GM12878 (cell line): ENCODE measurements at regions of chr7 and their contacts with region 1.

Region 1: DNA sequence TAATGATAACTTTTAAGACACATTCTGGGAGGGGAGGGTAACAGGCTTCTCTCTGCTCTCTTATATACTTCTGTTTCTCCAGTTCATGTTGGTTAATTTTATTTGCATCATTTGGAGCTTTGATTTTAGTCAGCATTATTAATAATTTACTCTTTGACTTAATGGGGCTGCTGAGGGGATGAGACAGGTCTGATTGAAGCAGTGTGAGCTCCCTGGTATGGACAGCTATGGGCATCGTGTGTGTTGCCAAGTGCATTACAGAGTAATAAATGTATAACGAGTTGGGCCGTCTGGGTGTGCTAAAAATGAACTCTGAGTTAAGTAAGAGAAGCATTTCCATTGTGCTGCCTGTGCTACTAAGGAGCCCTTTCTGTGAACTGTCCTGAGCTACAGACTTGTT is 31.7 kb upstream of the IKZF1 start:
- DNase-seq: no peak
- ATAC-seq: peak; percentile 47
- H3K4me3 ChIP-seq: no peak overlapping the region
- H3K27ac ChIP-seq: no peak overlapping the region
- H3K4me1 ChIP-seq: peaks cover 76% of the 10 kb centered on the region
- H3K27me3 ChIP-seq: no peaks in the 10 kb centered on the region
- CTCF ChIP-seq: no peak
- EP300 ChIP-seq: no peak
- POLR2A ChIP-seq: no peak
- RAD21 ChIP-seq: no peak

Region 2: GRCh38 chr7:50229964-50230363 is 42.8 kb before region 1 on chr7:
- CTCF ChIA-PET with region 1: interaction called, 9 read pairs
- POLR2A ChIA-PET with region 1: interaction called, 3 read pairs
- RAD21 ChIA-PET with region 1: no interaction called
- SMC1A ChIA-PET with region 1: interaction called, 22 read pairs
- in situ Hi-C with region 1: no loop called
- intact Hi-C with region 1: no loop called
- DNase-seq: no peak
- ATAC-seq: no peak
- H3K4me3 ChIP-seq: no peak overlapping the region
- H3K27ac ChIP-seq: no peak overlapping the region
- H3K4me1 ChIP-seq: no peaks in the 10 kb centered on the region
- H3K27me3 ChIP-seq: no peaks in the 10 kb centered on the region
- CTCF ChIP-seq: peak; percentile 21 to 58 (median 46); a peak in 5 of 6 replicates
- EP300 ChIP-seq: no peak
- POLR2A ChIP-seq: no peak
- RAD21 ChIP-seq: peak; percentile 58

Region 3: DNA sequence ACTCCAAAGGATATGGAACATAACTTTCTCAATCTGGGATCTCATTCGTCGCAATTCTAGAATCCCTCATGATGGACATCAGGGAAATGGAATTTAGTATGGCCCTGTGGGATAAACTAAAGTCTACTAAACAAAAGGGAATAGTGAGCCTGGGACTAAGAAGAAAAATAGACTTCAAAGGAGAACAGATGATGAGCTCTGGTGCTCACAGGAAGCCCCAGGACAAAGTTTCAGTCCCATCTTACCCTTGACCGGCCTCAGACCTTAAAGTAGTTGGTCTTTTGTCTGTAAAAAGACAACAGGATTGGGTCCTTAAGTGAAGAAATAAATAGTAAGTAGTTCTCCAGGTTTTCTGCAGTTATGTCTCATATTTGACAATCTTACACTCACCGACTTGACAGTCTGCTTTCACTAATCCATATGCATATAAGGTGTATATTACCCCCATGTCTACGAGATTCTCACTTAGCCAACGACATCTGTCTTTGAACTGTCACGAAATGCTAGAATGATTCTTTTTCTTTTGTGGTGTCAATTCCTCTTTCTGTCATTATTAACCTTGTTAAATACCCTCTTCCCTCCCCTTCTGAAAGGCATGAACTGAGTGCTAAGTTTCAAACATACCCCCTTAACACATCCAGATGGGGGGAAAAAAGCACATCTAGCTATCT is 20.8 kb after region 1 on chr7:
- CTCF ChIA-PET with region 1: interaction called, 29 read pairs
- POLR2A ChIA-PET with region 1: interaction called, 7 read pairs
- RAD21 ChIA-PET with region 1: interaction called, 53 read pairs
- SMC1A ChIA-PET with region 1: interaction called, 274 read pairs
- in situ Hi-C with region 1: no loop called
- intact Hi-C with region 1: no loop called
- DNase-seq: no peak
- ATAC-seq: peak; percentile 77
- H3K4me3 ChIP-seq: 0 out of 2 replicates have a peak overlapping the region, but pooled peaks have one; percentile 3
- H3K27ac ChIP-seq: peak overlapping the region; percentile 36
- H3K4me1 ChIP-seq: peaks cover 22% of the 10 kb centered on the region
- H3K27me3 ChIP-seq: no peaks in the 10 kb centered on the region
- CTCF ChIP-seq: no peak
- EP300 ChIP-seq: peak in 1 of 2 experiments; percentile 67; a peak in 1 of 4 replicates
- POLR2A ChIP-seq: no peak
- RAD21 ChIP-seq: no peak

Region 4: DNA sequence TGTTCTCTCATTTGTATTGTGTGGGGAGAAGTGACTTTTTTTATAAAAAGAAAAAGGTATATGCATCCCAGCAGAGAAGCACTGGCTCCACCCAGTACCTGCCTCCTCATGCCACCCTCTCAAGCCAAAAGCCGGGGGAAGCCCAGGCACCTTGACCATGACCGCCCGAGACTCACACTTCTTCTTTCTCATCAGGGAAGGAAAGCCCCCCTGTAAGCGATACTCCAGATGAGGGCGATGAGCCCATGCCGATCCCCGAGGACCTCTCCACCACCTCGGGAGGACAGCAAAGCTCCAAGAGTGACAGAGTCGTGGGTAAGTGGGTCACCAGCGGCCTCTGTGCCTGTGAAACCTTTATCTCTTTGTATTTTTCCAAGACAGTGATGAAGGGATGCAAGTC is 54.6 kb after region 1 on chr7:
- CTCF ChIA-PET with region 1: interaction called, 6 read pairs
- POLR2A ChIA-PET with region 1: interaction called, 9 read pairs
- RAD21 ChIA-PET with region 1: interaction called, 20 read pairs
- SMC1A ChIA-PET with region 1: interaction called, 24 read pairs
- in situ Hi-C with region 1: no loop called
- intact Hi-C with region 1: no loop called
- DNase-seq: no peak
- ATAC-seq: peak; percentile 80
- H3K4me3 ChIP-seq: no peak overlapping the region
- H3K27ac ChIP-seq: peak overlapping the region; percentile 44
- H3K4me1 ChIP-seq: peaks cover 44% of the 10 kb centered on the region
- H3K27me3 ChIP-seq: no peaks in the 10 kb centered on the region
- CTCF ChIP-seq: no peak; a peak in 1 of 6 replicates
- EP300 ChIP-seq: peak in 1 of 2 experiments; percentile 83; a peak in 2 of 4 replicates
- POLR2A ChIP-seq: no peak
- RAD21 ChIP-seq: peak; percentile 19; the same call in 1 of the 2 replicates

Region 5: GRCh38 chr7:50335795-50336754 is 63.3 kb after region 1 on chr7:
- CTCF ChIA-PET with region 1: interaction called, 10 read pairs
- POLR2A ChIA-PET with region 1: interaction called, 9 read pairs
- RAD21 ChIA-PET with region 1: interaction called, 22 read pairs
- SMC1A ChIA-PET with region 1: interaction called, 20 read pairs
- in situ Hi-C with region 1: no loop called
- intact Hi-C with region 1: no loop called
- DNase-seq: no peak
- ATAC-seq: peak; percentile 13
- H3K4me3 ChIP-seq: no peak overlapping the region
- H3K27ac ChIP-seq: peak overlapping the region; percentile 75
- H3K4me1 ChIP-seq: peaks cover 75% of the 10 kb centered on the region
- H3K27me3 ChIP-seq: no peaks in the 10 kb centered on the region
- CTCF ChIP-seq: peak; percentile 4 to 30 (median 16); a peak in 3 of 6 replicates
- EP300 ChIP-seq: no peak
- POLR2A ChIP-seq: peak; percentile 45; the same call in 1 of the 2 replicates
- RAD21 ChIP-seq: peak; percentile 32; the same call in 1 of the 2 replicates

Region 6: DNA sequence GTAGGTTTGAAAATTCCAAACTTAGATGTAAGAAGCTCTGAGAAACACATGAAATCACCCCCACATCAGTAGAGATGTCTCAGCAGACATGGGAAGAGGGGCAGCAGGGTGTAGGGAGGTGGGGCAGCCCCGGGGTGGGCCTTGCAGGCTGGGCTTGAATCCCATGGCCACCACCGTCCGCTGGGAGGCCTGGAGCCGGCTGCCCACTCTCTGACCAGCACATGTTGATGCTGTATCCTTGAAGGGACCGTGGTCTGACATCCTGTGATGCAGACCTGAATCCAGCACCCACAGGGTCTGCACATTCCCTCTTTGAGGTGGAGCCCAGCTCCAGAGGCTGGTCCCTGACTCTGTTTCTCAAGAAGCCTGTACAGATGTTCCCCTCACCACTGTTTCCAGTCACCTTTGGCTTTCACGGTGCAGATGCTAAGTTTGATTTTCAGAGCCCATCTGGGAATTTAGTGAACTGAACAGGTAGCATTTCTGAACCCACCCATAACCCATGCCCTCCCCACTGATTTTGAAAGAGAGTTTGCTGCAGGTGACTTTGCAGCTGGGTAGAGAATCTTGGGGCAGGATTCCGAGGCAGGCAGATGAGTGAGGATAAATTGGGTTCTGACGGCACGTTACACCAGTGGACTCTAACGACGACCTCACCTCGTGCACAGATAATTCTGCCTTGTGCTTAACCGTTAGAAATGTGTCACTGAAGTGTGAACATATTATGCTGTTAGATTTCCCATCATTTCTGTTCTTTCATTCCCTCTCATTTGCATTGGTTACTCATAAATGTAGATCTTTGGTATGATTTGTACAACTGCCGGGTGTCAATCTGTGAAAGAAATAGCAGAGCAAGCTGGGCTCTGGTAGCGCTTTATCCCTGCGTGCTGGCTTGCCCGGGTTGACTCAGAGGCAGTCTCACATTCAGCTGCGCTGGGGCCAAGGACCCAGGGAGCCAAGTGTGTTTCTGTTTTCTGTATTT is 77.4 kb after region 1 on chr7:
- CTCF ChIA-PET with region 1: interaction called, 3 read pairs
- POLR2A ChIA-PET with region 1: interaction called, 6 read pairs
- RAD21 ChIA-PET with region 1: interaction called, 17 read pairs
- SMC1A ChIA-PET with region 1: interaction called, 26 read pairs
- in situ Hi-C with region 1: no loop called
- intact Hi-C with region 1: no loop called
- DNase-seq: peak; percentile 84
- ATAC-seq: peak; percentile 90
- H3K4me3 ChIP-seq: no peak overlapping the region
- H3K27ac ChIP-seq: peak overlapping the region; percentile 86
- H3K4me1 ChIP-seq: peaks cover 31% of the 10 kb centered on the region
- H3K27me3 ChIP-seq: no peaks in the 10 kb centered on the region
- CTCF ChIP-seq: no peak
- EP300 ChIP-seq: peak; percentile 78 to 84
- POLR2A ChIP-seq: peak; percentile 44; the same call in 1 of the 2 replicates
- RAD21 ChIP-seq: 0 out of 2 replicates have a peak, but pooled peaks have one; percentile 24

Region 7: GRCh38 chr7:51918581-51918980 is 1645.8 kb after region 1 on chr7:
- CTCF ChIA-PET with region 1: no interaction called
- POLR2A ChIA-PET with region 1: no interaction called
- RAD21 ChIA-PET with region 1: no interaction called
- SMC1A ChIA-PET with region 1: no interaction called
- in situ Hi-C with region 1: no loop called
- intact Hi-C with region 1: no loop called
- DNase-seq: no peak
- ATAC-seq: no peak
- H3K4me3 ChIP-seq: no peak overlapping the region
- H3K27ac ChIP-seq: no peak overlapping the region
- H3K4me1 ChIP-seq: no peaks in the 10 kb centered on the region
- H3K27me3 ChIP-seq: no peaks in the 10 kb centered on the region
- CTCF ChIP-seq: no peak
- EP300 ChIP-seq: no peak
- POLR2A ChIP-seq: no peak
- RAD21 ChIP-seq: no peak